A673 (cell line): ENCODE measurements at regions of chr5 and their contacts with region 1.

Region 1: DNA sequence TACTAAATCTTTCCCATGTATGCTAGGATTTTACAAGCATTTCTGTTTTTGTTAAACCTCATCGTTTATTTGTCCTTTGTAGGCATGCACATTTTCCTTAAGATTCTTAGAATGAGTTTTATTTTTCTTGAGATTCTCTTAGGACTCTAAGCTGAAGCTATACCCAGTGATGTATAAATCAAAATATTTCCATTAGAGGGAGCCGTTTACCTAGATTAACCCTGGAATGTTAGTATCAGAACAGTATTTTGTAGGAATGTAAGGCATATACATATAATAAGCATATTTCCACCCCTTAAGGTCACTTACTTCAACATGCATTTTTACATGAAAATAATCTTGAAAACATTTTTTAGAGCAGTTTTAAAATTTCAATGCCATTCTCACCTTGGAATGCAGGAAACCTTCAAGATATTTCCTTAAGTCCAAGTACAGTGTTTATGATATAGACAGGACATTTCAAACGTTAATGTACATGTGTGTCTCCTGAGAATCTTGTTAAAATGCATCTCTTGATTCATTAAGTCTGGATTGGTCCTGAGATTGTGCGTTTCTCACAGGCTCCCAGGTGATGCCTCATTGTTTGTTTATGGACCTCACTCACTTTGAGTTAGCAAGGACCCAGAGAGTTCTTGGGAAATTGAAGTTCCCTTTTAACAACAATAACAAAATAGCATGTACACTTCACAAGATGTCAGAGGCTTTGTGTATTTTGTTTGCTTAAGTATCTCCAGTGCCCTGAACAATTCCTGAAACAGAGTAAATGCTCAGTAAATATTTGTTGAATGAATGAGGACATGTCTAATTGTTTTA is 34.9 kb upstream of the FCHO2 start:
- DNase-seq: peak; percentile 35
- H3K4me3 ChIP-seq: no peak overlapping the region
- H3K27ac ChIP-seq: no peak overlapping the region
- H3K4me1 ChIP-seq: peaks cover 11% of the 10 kb centered on the region
- H3K27me3 ChIP-seq: no peaks in the 10 kb centered on the region
- CTCF ChIP-seq: peak; percentile 45

Region 2: DNA sequence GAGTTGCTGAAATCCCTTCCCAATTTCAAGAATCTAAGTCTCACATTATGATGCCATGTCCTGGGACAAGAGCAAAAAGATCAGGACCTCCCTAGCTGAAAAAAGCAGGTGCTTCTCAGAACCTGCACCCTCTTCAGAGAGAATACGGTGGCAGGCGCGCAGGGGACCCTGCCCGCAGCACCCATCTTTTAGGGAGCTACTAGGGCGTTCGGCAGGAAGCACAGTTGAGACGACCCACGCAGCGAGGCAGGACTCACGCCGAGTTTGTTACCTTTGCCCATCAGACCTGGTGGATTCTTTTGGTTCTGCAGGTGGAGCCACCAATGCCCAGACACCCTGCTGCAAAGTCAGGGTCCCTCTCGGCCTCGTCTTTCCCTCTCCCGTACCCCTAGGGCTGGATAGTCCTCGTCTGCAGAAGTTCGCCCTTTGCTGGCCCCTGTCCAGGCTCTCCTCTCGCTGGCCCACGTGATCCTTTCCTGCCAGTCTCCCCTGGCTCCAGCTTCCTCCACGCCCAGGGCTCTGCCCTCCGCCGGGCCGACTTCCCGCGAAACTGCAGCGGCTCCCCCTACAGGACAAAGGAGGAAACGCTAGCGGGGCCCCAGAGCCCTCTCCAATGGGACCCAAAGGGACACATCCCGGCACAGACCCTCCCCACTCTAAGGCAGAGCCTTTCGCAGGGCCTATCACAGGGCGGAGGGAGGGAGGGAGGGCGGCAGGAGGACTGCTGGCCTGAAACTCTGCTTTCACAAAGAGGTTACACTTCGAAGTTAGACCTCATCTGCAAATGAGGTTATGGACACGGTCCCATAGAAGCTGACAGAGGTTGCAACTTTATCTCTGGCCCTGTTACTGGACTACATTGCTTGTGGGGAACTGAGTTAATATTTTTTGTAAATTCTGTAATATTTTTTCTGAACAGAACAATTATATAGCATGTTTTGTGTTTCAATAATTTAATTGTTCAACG is 280.9 kb after region 1 on chr5:
- CTCF ChIA-PET with region 1: no interaction called
- POLR2A ChIA-PET with region 1: no interaction called
- intact Hi-C with region 1: loop called (anchors 5 kb)
- DNase-seq: peak; percentile 87
- H3K4me3 ChIP-seq: no peak overlapping the region
- H3K27ac ChIP-seq: no peak overlapping the region
- H3K4me1 ChIP-seq: no peaks in the 10 kb centered on the region
- H3K27me3 ChIP-seq: no peaks in the 10 kb centered on the region
- CTCF ChIP-seq: peak; percentile 92

Region 3: GRCh38 chr5:73454351-73455036 is 533.6 kb after region 1 on chr5:
- CTCF ChIA-PET with region 1: no interaction called
- POLR2A ChIA-PET with region 1: no interaction called
- intact Hi-C with region 1: loop called (anchors 5 kb)
- DNase-seq: peak; percentile 62
- H3K4me3 ChIP-seq: no peak overlapping the region
- H3K27ac ChIP-seq: no peak overlapping the region
- H3K4me1 ChIP-seq: peaks cover 2% of the 10 kb centered on the region
- H3K27me3 ChIP-seq: peaks cover 44% of the 10 kb centered on the region
- CTCF ChIP-seq: peak; percentile 74

Region 4: GRCh38 chr5:73534971-73535370 is 614.1 kb after region 1 on chr5:
- CTCF ChIA-PET with region 1: no interaction called
- POLR2A ChIA-PET with region 1: no interaction called
- intact Hi-C with region 1: loop called (anchors 5 kb)
- DNase-seq: no peak
- H3K4me3 ChIP-seq: no peak overlapping the region
- H3K27ac ChIP-seq: no peak overlapping the region
- H3K4me1 ChIP-seq: no peaks in the 10 kb centered on the region
- H3K27me3 ChIP-seq: no peaks in the 10 kb centered on the region
- CTCF ChIP-seq: no peak